ENCODE measurements at regions of chr3 and their contacts with region 1.

Region 1: GRCh38 chr3:39288300-39288808 is 8.5 kb upstream of the CX3CR1 start:
- DNase-seq: peak; percentile 95
- ATAC-seq: peak; percentile 97
- H3K4me3 Mint-ChIP-seq: no peak overlapping the region
- H3K27ac Mint-ChIP-seq: peak overlapping the region; percentile 39
- H3K4me1 Mint-ChIP-seq: peaks cover 50% of the 10 kb centered on the region
- H3K27me3 Mint-ChIP-seq: peaks cover 3% of the 10 kb centered on the region

Region 2: GRCh38 chr3:37511463-37511920 is 1776.9 kb before region 1 on chr3:
- CTCF ChIA-PET with region 1: no interaction called
- DNase-seq: no peak
- ATAC-seq: no peak
- H3K4me3 Mint-ChIP-seq: no peak overlapping the region
- H3K27ac Mint-ChIP-seq: no peak overlapping the region
- H3K4me1 Mint-ChIP-seq: no peaks in the 10 kb centered on the region
- H3K27me3 Mint-ChIP-seq: peaks cover 19% of the 10 kb centered on the region

Region 3: GRCh38 chr3:39101022-39101689 is 187.2 kb before region 1 on chr3:
- CTCF ChIA-PET with region 1: interaction called, 37 read pairs
- DNase-seq: peak; percentile 61
- ATAC-seq: peak; percentile 80
- H3K4me3 Mint-ChIP-seq: no peak overlapping the region
- H3K27ac Mint-ChIP-seq: no peak overlapping the region
- H3K4me1 Mint-ChIP-seq: peaks cover 16% of the 10 kb centered on the region
- H3K27me3 Mint-ChIP-seq: no peaks in the 10 kb centered on the region

Region 4: GRCh38 chr3:39126532-39127071 is 161.8 kb before region 1 on chr3:
- CTCF ChIA-PET with region 1: interaction called, 160 read pairs
- DNase-seq: no peak
- ATAC-seq: no peak
- H3K4me3 Mint-ChIP-seq: no peak overlapping the region
- H3K27ac Mint-ChIP-seq: no peak overlapping the region
- H3K4me1 Mint-ChIP-seq: peaks cover 18% of the 10 kb centered on the region
- H3K27me3 Mint-ChIP-seq: peaks cover 8% of the 10 kb centered on the region

Region 5: DNA sequence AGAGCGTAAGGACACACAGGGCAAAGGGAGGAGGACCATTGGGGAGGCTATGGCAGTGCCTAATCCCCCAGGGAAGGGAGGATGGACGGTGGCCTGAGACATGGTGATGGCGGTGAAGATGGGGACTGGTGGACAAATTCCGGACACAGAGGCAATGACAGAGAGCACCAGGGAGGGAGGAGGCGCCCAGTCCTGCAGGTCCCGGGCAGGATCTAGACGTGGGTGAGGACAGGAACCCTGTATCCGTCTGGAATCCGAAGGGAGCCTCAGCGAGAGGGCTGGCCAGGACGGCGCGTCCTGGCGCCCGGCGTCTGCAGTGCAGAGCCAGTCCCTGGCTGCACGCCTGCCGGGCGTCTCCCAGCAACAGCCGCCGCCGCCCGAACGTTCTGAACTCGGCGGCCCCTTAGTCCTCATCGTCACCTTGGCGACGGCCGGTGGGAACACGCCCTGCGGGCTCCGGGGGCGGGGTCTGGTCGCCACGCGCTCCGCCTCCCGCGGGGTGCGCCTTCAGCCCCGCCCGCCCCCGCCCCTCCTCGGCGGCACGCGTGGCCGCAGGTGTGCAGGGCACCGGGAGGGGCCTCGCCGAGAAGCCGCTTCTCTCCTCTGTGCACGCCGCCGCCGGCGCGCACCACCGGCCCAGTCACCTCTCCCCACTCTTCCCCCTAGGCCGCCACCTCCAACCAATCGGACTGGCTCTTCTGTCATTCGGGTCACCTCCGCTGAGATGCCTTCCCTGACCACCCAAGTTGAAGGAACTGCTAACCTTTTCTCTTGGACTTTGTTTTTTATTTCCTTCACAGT is 107.6 kb before region 1 on chr3:
- CTCF ChIA-PET with region 1: interaction called, 389 read pairs
- DNase-seq: peak; percentile 93
- ATAC-seq: peak; percentile 89
- H3K4me3 Mint-ChIP-seq: peak overlapping the region; percentile 80
- H3K27ac Mint-ChIP-seq: peak overlapping the region; percentile 79
- H3K4me1 Mint-ChIP-seq: peaks cover 44% of the 10 kb centered on the region
- H3K27me3 Mint-ChIP-seq: no peaks in the 10 kb centered on the region

Region 6: DNA sequence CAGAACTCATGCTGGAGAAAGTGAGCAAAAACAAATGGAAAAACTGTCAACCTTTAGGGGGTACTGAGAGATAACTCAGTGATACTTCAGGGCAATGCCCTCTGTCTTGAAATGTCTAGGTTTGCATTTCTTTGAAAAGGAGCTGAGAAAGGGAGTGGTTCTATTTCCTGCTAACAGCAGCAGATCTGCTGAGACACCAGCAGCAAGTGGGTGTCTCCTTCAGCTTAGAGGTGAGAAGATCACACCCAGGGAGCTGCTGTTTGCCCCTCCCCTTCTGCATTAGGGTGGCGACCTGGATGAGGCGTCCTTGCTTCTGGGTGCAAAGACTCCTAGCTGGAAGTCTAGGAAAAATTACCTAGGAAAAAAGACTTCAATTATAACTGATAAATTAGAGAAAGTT is 53.6 kb before region 1 on chr3:
- CTCF ChIA-PET with region 1: interaction called, 12 read pairs
- DNase-seq: peak; percentile 65
- ATAC-seq: peak; percentile 95
- H3K4me3 Mint-ChIP-seq: no peak overlapping the region
- H3K27ac Mint-ChIP-seq: peak overlapping the region; percentile 67
- H3K4me1 Mint-ChIP-seq: peaks cover 30% of the 10 kb centered on the region
- H3K27me3 Mint-ChIP-seq: peaks cover 70% of the 10 kb centered on the region

Region 7: GRCh38 chr3:39302178-39302577 is 13.8 kb after region 1 on chr3:
- CTCF ChIA-PET with region 1: interaction called, 14 read pairs
- DNase-seq: no peak
- ATAC-seq: no peak
- H3K4me3 Mint-ChIP-seq: no peak overlapping the region
- H3K27ac Mint-ChIP-seq: no peak overlapping the region
- H3K4me1 Mint-ChIP-seq: peaks cover 2% of the 10 kb centered on the region
- H3K27me3 Mint-ChIP-seq: peaks cover 55% of the 10 kb centered on the region

Region 8: DNA sequence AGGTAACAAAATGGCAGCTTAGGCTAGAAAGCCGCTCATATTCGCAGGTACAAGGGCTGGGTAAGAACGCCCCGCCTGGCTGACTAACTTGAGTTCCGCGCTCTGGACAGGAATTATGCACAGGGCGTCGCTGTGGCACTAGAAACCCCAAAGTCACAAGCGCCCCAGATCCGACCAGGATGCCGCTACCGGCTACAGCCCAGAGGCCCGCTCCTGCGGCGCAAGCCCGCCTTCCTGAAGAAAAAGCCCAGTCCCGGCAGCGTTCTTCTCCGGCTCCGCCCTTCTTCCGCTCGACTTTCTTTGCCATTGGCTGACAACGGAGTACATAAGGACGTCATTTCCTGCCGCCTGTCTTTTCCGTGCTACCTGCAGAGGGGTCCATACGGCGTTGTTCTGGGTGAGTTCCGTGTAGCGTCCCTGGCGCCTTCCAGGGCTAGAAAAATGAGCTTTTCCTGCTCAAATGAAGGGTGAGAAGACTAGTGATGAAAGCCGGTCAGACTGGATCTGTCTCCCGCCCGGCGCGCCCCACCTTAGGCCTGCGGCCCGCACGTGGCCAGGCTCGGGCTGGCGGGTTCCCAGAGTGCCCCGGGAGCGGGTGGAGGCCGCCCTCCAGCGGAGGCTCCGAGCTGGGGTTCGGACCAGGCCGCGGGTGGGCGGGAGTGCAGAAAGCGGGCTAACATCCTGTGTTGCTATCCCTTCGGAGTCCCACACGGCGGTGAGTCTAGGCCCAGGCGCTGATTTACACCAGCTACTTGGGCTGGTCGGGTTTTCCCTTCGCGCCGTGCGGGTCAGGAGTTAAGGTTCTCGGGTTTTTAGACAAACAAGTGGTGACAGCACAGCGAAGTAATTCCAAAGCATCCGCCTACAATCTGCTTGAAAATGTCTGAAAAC is 118.3 kb after region 1 on chr3 and contains the start of gene RPSA:
- CTCF ChIA-PET with region 1: interaction called, 42 read pairs
- DNase-seq: peak; percentile 98
- ATAC-seq: peak; percentile 91
- H3K4me3 Mint-ChIP-seq: peak within 1 kb of the TSS; percentile 90
- H3K27ac Mint-ChIP-seq: peak within 1 kb of the TSS; percentile 91
- H3K4me1 Mint-ChIP-seq: peaks cover 48% of the 10 kb centered on the region
- H3K27me3 Mint-ChIP-seq: no peaks in the 10 kb centered on the region
- total RNA-seq, gene RPSA: 1,232 to 1,591 TPM

Region 9: GRCh38 chr3:39434574-39434973 is 146.2 kb after region 1 on chr3:
- CTCF ChIA-PET with region 1: no interaction called
- DNase-seq: peak; percentile 53
- ATAC-seq: peak; percentile 67
- H3K4me3 Mint-ChIP-seq: no peak overlapping the region
- H3K27ac Mint-ChIP-seq: no peak overlapping the region
- H3K4me1 Mint-ChIP-seq: peaks cover 3% of the 10 kb centered on the region
- H3K27me3 Mint-ChIP-seq: peaks cover 6% of the 10 kb centered on the region

Measured in activated CD8-positive, alpha-beta memory T cell treated with anti-CD3 and anti-CD28 coated beads, Interleukin-2, amount 10 ng/mL, durations not matched to agents 7 days and 5 days (primary cell).